ENCODE measurements at regions of chr1 and their contacts with region 1.

Region 1: GRCh38 chr1:157496121-157496526 is 56.2 kb downstream of the FCRL5 start:
- DNase-seq: peak in 1 of 2 experiments; percentile 43
- ATAC-seq: peak; percentile 72 to 92
- H3K4me3 ChIP-seq: no peak overlapping the region
- H3K27ac ChIP-seq: no peak overlapping the region
- H3K4me1 ChIP-seq: no peaks in the 10 kb centered on the region
- CTCF ChIP-seq: peak; percentile 62
- EP300 ChIP-seq: no peak
- POLR2A ChIP-seq: no peak
- RAD21 ChIP-seq: peak; percentile 43 to 48; a peak in 3 of 5 replicates

Region 2: DNA sequence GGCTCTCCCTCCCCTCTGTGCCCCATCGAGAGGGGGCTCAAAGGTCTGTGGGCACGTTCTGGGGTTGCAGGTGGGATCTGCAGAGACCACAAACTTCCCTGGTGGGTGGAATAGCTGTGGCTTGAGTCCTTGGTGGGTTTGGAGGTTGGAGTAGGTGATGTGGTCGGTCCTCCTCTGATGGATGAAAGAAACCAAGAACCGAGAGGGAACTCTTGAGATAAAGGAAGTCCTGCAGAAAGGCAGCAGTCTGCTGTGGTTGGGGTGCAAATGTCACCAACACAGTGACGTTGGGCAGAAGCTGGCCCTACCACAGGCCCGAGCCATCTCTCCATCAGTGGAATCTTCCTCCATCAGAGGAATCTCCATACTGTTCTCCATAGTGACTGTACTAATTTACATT is 115.6 kb before region 1 on chr1:
- CTCF ChIA-PET with region 1: interaction called, 10 read pairs
- POLR2A ChIA-PET with region 1: no interaction called
- DNase-seq: no peak
- ATAC-seq: no peak
- H3K4me3 ChIP-seq: no peak overlapping the region
- H3K27ac ChIP-seq: no peak overlapping the region
- H3K4me1 ChIP-seq: no peaks in the 10 kb centered on the region
- CTCF ChIP-seq: no peak
- EP300 ChIP-seq: no peak
- POLR2A ChIP-seq: no peak
- RAD21 ChIP-seq: no peak

Region 3: GRCh38 chr1:157523774-157524493 is 27.8 kb after region 1 on chr1:
- CTCF ChIA-PET with region 1: no interaction called
- POLR2A ChIA-PET with region 1: no interaction called
- DNase-seq: no peak
- ATAC-seq: no peak
- H3K4me3 ChIP-seq: no peak overlapping the region
- H3K27ac ChIP-seq: no peak overlapping the region
- H3K4me1 ChIP-seq: no peaks in the 10 kb centered on the region
- CTCF ChIP-seq: no peak
- EP300 ChIP-seq: no peak
- POLR2A ChIP-seq: no peak
- RAD21 ChIP-seq: no peak